Activated CD4-positive, alpha-beta T cell treated with anti-CD3 and anti-CD28 coated beads for 36 hours (primary cell): ENCODE measurements at regions of chrX and their contacts with region 1.

Region 1: GRCh38 chrX:100994352-100995281 is 25.1 kb downstream of the ARL13A start:
- DNase-seq: peak; percentile 38
- ATAC-seq: peak; percentile 88
- H3K4me3 Mint-ChIP-seq: no peak overlapping the region
- H3K27ac Mint-ChIP-seq: peak overlapping the region; percentile 65
- H3K4me1 Mint-ChIP-seq: peaks cover 22% of the 10 kb centered on the region
- H3K27me3 Mint-ChIP-seq: no peaks in the 10 kb centered on the region

Region 2: DNA sequence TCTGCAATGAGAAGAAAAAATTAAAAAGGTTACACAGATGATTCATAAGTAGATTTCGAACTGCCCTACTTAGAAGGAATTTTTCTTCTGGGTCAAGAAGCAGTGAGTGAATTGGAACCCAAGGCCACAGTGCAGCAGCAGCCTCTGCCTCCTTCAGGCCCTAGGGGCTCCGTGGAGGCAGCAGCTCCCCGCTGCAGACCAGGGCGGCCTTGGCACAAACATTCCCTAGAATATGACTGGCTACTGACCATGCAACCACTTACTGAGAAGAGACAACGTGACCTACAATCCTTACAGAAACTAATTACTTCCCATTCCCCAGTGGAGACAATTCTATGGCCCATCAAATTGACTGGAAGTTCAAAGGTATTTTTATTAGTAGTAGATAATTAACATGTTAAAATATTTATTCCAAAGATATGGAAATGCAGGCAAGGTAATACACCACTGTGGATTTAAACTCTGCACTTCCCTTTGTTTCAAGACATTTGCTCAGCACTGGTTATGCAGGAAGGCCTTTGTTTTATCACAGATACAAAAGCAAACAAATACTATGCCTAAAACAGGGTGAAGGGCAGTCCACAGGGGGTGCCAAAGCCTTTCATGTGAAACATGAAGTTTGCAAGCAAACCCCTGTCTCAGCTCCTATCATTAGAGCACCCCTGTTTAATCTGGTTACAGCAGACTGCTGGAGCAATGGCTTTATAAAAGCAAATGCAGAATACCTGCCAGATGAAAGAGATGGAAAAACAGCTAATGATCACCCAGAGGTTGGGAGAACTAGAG is 643.7 kb before region 1 on chrX:
- CTCF ChIA-PET with region 1: no interaction called
- POLR2A ChIA-PET with region 1: no interaction called
- intact Hi-C with region 1: no loop called
- DNase-seq: no peak
- ATAC-seq: no peak
- H3K4me3 Mint-ChIP-seq: no peak overlapping the region
- H3K27ac Mint-ChIP-seq: no peak overlapping the region
- H3K4me1 Mint-ChIP-seq: no peaks in the 10 kb centered on the region
- H3K27me3 Mint-ChIP-seq: no peaks in the 10 kb centered on the region

Region 3: GRCh38 chrX:100895365-100896075 is 99.1 kb before region 1 on chrX:
- CTCF ChIA-PET with region 1: no interaction called
- POLR2A ChIA-PET with region 1: no interaction called
- intact Hi-C with region 1: loop called in 1 of 2 experiments (anchors 10 kb)
- DNase-seq: peak; percentile 52
- ATAC-seq: peak; percentile 51
- H3K4me3 Mint-ChIP-seq: no peak overlapping the region
- H3K27ac Mint-ChIP-seq: no peak overlapping the region
- H3K4me1 Mint-ChIP-seq: no peaks in the 10 kb centered on the region
- H3K27me3 Mint-ChIP-seq: no peaks in the 10 kb centered on the region

Region 4: DNA sequence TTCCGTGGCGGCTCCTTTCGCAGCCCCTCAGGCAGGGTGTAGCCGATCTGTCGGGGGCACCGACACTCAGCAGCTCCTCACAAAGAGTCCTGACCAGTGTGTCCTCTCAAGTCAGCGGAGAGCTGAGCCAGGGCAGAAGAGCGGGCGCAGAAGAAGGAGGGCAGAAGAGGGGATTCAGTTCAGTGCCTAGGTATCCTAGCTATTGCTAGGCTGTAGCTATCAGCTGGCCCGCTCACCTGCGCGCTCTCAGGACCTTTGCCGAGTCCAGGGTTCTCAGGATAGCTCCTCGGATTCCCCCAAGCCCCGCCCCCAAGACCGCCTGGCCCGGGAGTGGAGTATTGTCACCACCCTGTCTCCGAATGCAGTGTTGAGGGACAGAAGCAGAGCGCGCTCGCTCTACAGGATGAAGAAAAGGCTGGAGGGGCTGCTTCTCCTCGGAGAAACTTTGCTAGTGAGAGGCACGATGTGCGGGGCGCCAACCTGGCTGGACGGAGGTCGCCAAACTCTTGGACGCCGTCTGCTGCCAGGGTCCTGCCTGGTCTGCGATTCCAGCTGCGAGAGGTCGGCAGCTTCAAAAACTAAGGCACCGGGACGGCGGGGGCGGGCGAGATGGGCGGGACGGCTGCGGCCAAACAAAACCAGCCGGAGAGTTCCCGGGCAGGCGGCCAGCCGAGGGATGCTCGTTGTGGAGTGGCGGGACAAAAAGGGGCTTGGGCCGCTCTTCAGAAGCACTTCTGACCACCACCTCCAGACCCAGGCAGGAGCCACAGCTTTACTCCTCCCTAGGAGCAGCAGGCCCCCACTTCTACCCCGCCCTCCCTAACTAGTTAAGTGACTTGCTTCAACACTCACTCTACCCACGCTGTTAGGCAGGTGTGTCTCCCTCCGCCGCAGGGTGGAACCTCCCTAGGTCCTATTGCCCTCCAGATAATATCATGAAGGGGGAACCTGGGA is 65.7 kb before region 1 on chrX and contains the start of gene XKRX:
- CTCF ChIA-PET with region 1: interaction called, 3 read pairs
- POLR2A ChIA-PET with region 1: interaction called, 3 read pairs
- intact Hi-C with region 1: loop called (anchors 1 to 2 kb)
- DNase-seq: peak; percentile 74
- ATAC-seq: peak; percentile 78
- H3K4me3 Mint-ChIP-seq: peak within 1 kb of the TSS; percentile 79
- H3K27ac Mint-ChIP-seq: peak within 1 kb of the TSS; percentile 75
- H3K4me1 Mint-ChIP-seq: peaks cover 53% of the 10 kb centered on the region
- H3K27me3 Mint-ChIP-seq: no peaks in the 10 kb centered on the region
- total RNA-seq, gene XKRX: 0.78 to 1.0 TPM